Thyroid gland (tissue), 4 donors: ENCODE measurements at regions of chr2 and their contacts with region 1.

Region 1: GRCh38 chr2:86562922-86563649 is at the start of gene CHMP3:
- DNase-seq: peak; percentile 95 to 98
- H3K4me3 ChIP-seq: peak within 1 kb of the TSS; percentile 56 to 65 (median 61)
- H3K27ac ChIP-seq: peak within 1 kb of the TSS; percentile 98 to 99 (median 99)
- H3K4me1 ChIP-seq: peaks cover 14 to 18% of the 10 kb centered on the region in 2 donors
- H3K27me3 ChIP-seq: no peaks in the 10 kb centered on the region
- CTCF ChIP-seq: peak in 1 of 6 experiments; percentile 2
- POLR2A ChIP-seq: peak in 1 of 2 donors; percentile 64
- total RNA-seq, gene CHMP3: 86.8 to 124 (median 108) TPM

Region 2: GRCh38 chr2:86414996-86415395 is 148.1 kb before region 1 on chr2:
- intact Hi-C with region 1: no loop called
- DNase-seq: no peak
- H3K4me3 ChIP-seq: no peak overlapping the region
- H3K27ac ChIP-seq: no peak overlapping the region
- H3K4me1 ChIP-seq: no peaks in the 10 kb centered on the region
- H3K27me3 ChIP-seq: no peaks in the 10 kb centered on the region
- CTCF ChIP-seq: no peak
- POLR2A ChIP-seq: no peak

Region 3: GRCh38 chr2:86426272-86426671 is 136.8 kb before region 1 on chr2:
- intact Hi-C with region 1: no loop called
- DNase-seq: no peak
- H3K4me3 ChIP-seq: no peak overlapping the region
- H3K27ac ChIP-seq: no peak overlapping the region
- H3K4me1 ChIP-seq: no peaks in the 10 kb centered on the region
- H3K27me3 ChIP-seq: no peaks in the 10 kb centered on the region
- CTCF ChIP-seq: no peak
- POLR2A ChIP-seq: no peak

Region 4: GRCh38 chr2:86446060-86446459 is 117.0 kb before region 1 on chr2:
- intact Hi-C with region 1: loop called (anchors 5 kb)
- DNase-seq: no peak
- H3K4me3 ChIP-seq: no peak overlapping the region
- H3K27ac ChIP-seq: no peak overlapping the region
- H3K4me1 ChIP-seq: peaks cover 23 to 29% of the 10 kb centered on the region in 2 donors
- H3K27me3 ChIP-seq: no peaks in the 10 kb centered on the region
- CTCF ChIP-seq: no peak
- POLR2A ChIP-seq: no peak

Region 5: GRCh38 chr2:86623651-86624541 is 60.8 kb after region 1 on chr2 and contains the start of gene RNF103:
- intact Hi-C with region 1: loop called (anchors 10 kb)
- DNase-seq: peak; percentile 97 to 98
- H3K4me3 ChIP-seq: peak within 1 kb of the TSS; percentile 51 to 99 (median 83)
- H3K27ac ChIP-seq: peak within 1 kb of the TSS; percentile 94 to 97 (median 95)
- H3K4me1 ChIP-seq: peaks cover 7 to 8% of the 10 kb centered on the region in 2 donors
- H3K27me3 ChIP-seq: no peaks in the 10 kb centered on the region
- CTCF ChIP-seq: peak in 1 of 6 experiments; percentile 13
- POLR2A ChIP-seq: peak; percentile 94 to 99
- total RNA-seq, gene RNF103: 26.0 to 36.8 (median 33.3) TPM